ENCODE measurements at regions of chr9 and their contacts with region 1.

Region 1: DNA sequence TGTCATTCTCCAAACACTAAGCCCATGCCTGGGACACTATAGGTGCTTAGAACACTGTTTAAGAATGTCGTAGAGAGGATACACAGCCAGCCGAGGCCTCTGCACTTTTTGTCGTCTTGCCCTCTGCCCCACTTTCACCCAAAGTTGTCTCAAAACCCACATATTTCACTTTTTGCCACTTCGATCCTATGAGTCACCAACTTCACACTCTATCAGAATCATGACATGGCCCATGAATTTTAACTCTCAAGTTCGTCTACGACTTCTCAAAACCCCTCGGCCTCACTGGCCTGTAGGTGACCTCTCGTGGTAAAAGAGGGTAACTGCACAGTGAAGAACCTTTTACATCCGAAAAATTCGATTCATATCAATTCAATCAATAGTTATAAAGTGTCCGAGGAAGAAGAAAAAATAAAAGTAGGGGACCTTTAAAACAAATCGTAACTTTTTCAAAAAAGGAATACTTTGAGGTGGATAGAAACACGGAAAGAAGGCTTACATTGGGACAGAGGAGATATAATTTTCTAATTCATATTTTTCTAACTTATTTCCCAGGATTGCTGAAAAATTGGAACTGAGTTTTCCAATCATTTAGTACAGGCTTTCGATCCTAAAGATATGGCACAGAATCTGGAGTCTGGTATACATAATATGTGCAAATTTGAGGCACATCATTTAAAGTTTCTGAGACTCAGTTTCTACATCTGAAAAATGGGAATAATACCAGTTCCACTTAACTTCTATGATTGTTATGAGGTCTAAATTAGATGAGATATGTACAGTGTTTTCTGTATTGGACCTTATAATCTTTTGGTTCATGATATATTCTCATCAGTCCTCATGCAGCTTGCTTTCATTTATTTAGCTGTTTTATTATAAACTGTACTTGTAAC is 122.6 kb downstream of the APBA1 start:
- DNase-seq: peak in 1 of 4 donors; percentile 44
- ATAC-seq: peak; percentile 90
- H3K4me3 ChIP-seq: no peak overlapping the region
- H3K27ac ChIP-seq: no peak overlapping the region
- H3K4me1 ChIP-seq: no peaks in the 10 kb centered on the region
- H3K27me3 ChIP-seq: no peaks in the 10 kb centered on the region
- CTCF ChIP-seq: peak; percentile 56 to 82

Region 2: GRCh38 chr9:69085569-69086283 is 463.8 kb before region 1 on chr9:
- intact Hi-C with region 1: no loop called
- DNase-seq: peak in 2 of 4 donors; percentile 79 to 80
- ATAC-seq: peak; percentile 57
- H3K4me3 ChIP-seq: no peak overlapping the region
- H3K27ac ChIP-seq: no peak overlapping the region
- H3K4me1 ChIP-seq: peaks cover 5 to 7% of the 10 kb centered on the region in 2 donors
- H3K27me3 ChIP-seq: no peaks in the 10 kb centered on the region
- CTCF ChIP-seq: no peak

Region 3: GRCh38 chr9:69421908-69422801 is 127.4 kb before region 1 on chr9:
- intact Hi-C with region 1: loop called in 1 of 2 experiments (anchors 5 kb)
- DNase-seq: peak in 2 of 4 donors; percentile 63 to 70
- ATAC-seq: peak; percentile 96
- H3K4me3 ChIP-seq: no peak overlapping the region
- H3K27ac ChIP-seq: no peak overlapping the region
- H3K4me1 ChIP-seq: no peaks in the 10 kb centered on the region
- H3K27me3 ChIP-seq: no peaks in the 10 kb centered on the region
- CTCF ChIP-seq: peak; percentile 63 to 80

Region 4: GRCh38 chr9:69476016-69476415 is 73.5 kb before region 1 on chr9:
- intact Hi-C with region 1: no loop called
- DNase-seq: no peak
- ATAC-seq: peak; percentile 56
- H3K4me3 ChIP-seq: no peak overlapping the region
- H3K27ac ChIP-seq: no peak overlapping the region
- H3K4me1 ChIP-seq: no peaks in the 10 kb centered on the region
- H3K27me3 ChIP-seq: no peaks in the 10 kb centered on the region
- CTCF ChIP-seq: no peak

Region 5: DNA sequence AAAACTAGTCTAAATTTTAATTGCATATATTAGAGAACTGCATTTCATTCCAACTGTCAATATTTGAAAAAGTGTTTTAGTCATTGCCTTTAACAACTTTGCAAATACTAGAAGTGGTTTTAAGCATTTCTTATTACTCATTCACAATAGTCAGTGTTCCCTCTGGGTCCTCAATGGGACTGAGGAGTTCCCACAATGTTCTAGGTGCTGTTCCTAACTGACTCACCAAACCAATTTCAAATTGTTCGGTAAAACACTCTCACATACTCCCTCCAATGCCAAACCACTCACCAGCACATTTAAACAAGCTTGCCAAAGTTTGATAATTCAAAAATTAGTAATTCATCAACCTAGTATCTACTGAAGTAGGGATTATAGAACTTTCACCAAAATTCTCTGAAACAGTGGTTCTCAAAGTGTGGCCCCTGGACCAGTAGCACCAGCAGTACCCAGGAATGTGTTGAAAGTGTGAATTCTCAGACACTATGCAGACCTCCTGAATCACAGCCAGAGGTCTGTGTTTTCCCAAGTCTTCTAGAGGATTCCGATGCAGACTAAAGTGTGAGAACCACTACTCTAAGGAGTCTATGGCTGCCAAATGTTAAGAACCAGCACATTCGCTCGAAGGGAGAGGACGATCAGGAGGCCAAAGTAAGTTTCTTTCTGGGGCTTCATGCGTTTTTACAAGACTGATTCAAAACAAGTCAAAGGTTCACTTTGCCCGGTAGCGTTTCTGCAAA is 49.8 kb after region 1 on chr9:
- intact Hi-C with region 1: no loop called
- DNase-seq: no peak
- ATAC-seq: peak; percentile 95
- H3K4me3 ChIP-seq: no peak overlapping the region
- H3K27ac ChIP-seq: no peak overlapping the region
- H3K4me1 ChIP-seq: no peaks in the 10 kb centered on the region
- H3K27me3 ChIP-seq: no peaks in the 10 kb centered on the region
- CTCF ChIP-seq: no peak

Measured in left lung (tissue), 14 donors.